PC-9 (cell line): ENCODE measurements at regions of chr4 and their contacts with region 1.

Region 1: GRCh38 chr4:115865736-115866135 is 752.3 kb upstream of the NDST4 start:
- DNase-seq: no peak
- H3K4me3 ChIP-seq: no peak overlapping the region
- H3K27ac ChIP-seq: no peak overlapping the region
- H3K4me1 ChIP-seq: no peaks in the 10 kb centered on the region
- H3K27me3 ChIP-seq: no peaks in the 10 kb centered on the region
- CTCF ChIP-seq: no peak

Region 2: GRCh38 chr4:116016201-116016600 is 150.5 kb after region 1 on chr4:
- CTCF ChIA-PET with region 1: no interaction called
- POLR2A ChIA-PET with region 1: no interaction called
- intact Hi-C with region 1: no loop called
- DNase-seq: peak; percentile 62 to 92
- H3K4me3 ChIP-seq: no peak overlapping the region; the same call in 1 of the 2 replicates
- H3K27ac ChIP-seq: peak overlapping the region; percentile 69
- H3K4me1 ChIP-seq: peaks cover 10% of the 10 kb centered on the region
- H3K27me3 ChIP-seq: no peaks in the 10 kb centered on the region
- CTCF ChIP-seq: no peak

Region 3: GRCh38 chr4:116122124-116122523 is 256.4 kb after region 1 on chr4:
- CTCF ChIA-PET with region 1: no interaction called
- POLR2A ChIA-PET with region 1: no interaction called
- intact Hi-C with region 1: loop called (anchors 5 kb)
- DNase-seq: peak in 1 of 2 experiments; percentile 34
- H3K4me3 ChIP-seq: no peak overlapping the region
- H3K27ac ChIP-seq: no peak overlapping the region
- H3K4me1 ChIP-seq: 0 out of 2 replicates have a peak, but pooled peaks cover 8% of the 10 kb centered on the region
- H3K27me3 ChIP-seq: no peaks in the 10 kb centered on the region
- CTCF ChIP-seq: no peak